ENCODE measurements at regions of chr4 and their contacts with region 1.

Region 1: GRCh38 chr4:94304365-94304971 is 38.2 kb downstream of the HPGDS start:
- DNase-seq: peak; percentile 12
- H3K4me3 ChIP-seq: no peak overlapping the region
- H3K27ac ChIP-seq: no peak overlapping the region
- H3K4me1 ChIP-seq: no peaks in the 10 kb centered on the region
- H3K27me3 ChIP-seq: no peaks in the 10 kb centered on the region
- CTCF ChIP-seq: peak in 3 of 4 experiments; percentile 58 to 70 (median 68)
- POLR2A ChIP-seq: no peak

Region 2: GRCh38 chr4:94175553-94176270 is 128.8 kb before region 1 on chr4:
- intact Hi-C with region 1: no loop called
- DNase-seq: no peak
- H3K4me3 ChIP-seq: no peak overlapping the region
- H3K27ac ChIP-seq: no peak overlapping the region
- H3K4me1 ChIP-seq: no peaks in the 10 kb centered on the region
- H3K27me3 ChIP-seq: no peaks in the 10 kb centered on the region
- CTCF ChIP-seq: no peak
- POLR2A ChIP-seq: no peak

Region 3: DNA sequence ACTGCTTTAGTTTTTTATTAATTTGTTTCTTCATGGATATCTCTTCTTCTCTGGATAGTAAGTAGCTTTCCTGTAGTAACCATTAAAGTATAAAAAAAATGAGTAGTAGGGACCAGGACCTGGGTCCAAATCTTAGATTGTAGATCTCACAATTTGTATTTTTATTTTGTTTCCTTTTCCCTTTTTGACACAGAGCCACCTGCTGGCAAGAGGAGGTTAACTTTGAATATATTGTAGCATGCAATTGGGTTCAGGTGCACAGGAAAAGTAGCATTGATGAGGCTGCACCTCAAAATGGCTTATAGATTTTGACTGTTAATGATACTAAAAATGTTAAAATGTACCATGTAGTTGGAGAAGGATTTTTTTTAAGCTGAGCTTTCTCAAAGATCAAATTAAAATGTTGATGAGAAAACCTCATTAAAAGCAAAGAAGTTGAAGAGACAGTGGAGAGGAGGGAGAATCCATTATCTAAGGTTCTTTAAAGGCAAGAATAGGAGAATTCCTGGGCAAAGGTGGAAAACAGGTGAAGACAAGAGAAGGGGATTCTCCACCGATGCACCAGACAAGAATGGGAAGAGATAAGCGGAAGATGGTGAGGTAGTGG is 86.4 kb after region 1 on chr4:
- intact Hi-C with region 1: loop called (anchors 10 kb)
- DNase-seq: peak; percentile 46
- H3K4me3 ChIP-seq: no peak overlapping the region
- H3K27ac ChIP-seq: no peak overlapping the region
- H3K4me1 ChIP-seq: no peaks in the 10 kb centered on the region
- H3K27me3 ChIP-seq: no peaks in the 10 kb centered on the region
- CTCF ChIP-seq: peak in 3 of 4 experiments; percentile 54 to 74 (median 68)
- POLR2A ChIP-seq: no peak

Region 4: DNA sequence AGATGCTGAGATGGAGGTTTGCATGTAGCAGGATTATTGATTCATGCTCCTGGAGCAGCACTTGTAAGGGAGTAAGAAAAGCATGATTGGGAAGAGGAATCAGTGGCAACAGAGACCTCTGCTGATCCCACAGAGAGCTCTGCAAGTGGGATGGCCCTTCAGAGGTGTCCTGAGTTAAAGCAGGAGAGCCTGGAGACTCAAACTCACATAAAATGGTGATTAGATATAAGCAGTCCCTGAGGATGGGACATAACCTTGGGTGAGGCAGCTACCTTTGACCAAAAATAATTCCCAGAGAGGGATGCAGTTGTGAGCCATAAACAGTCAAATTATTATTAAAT is 427.9 kb after region 1 on chr4:
- intact Hi-C with region 1: loop called (anchors 5 kb)
- DNase-seq: no peak
- H3K4me3 ChIP-seq: no peak overlapping the region
- H3K27ac ChIP-seq: no peak overlapping the region
- H3K4me1 ChIP-seq: no peaks in the 10 kb centered on the region
- H3K27me3 ChIP-seq: no peaks in the 10 kb centered on the region
- CTCF ChIP-seq: no peak
- POLR2A ChIP-seq: no peak

Measured in prostate gland (tissue), 2 donors.